ENCODE measurements at regions of chr1 and their contacts with region 1.

Region 1: GRCh38 chr1:44807262-44808062 is at the start of gene DYNLT4:
- DNase-seq: peak; percentile 86 to 99 (median 90)
- ATAC-seq: peak; percentile 84
- H3K4me3 ChIP-seq: peak within 1 kb of the TSS; percentile 30; the same call in 1 of the 2 replicates
- H3K27ac ChIP-seq: peak within 1 kb of the TSS; percentile 100
- H3K4me1 ChIP-seq: peaks cover 59 to 72% of the 10 kb centered on the region in 2 experiments
- H3K27me3 ChIP-seq: no peaks in the 10 kb centered on the region
- CTCF ChIP-seq: peak in 1 of 3 experiments; percentile 0; a peak in 1 of 6 replicates
- EP300 ChIP-seq: peak; percentile 71; the same call in 1 of the 2 replicates
- POLR2A ChIP-seq: peak; percentile 88
- RAD21 ChIP-seq: peak; percentile 9 to 20; a peak in 3 of 4 replicates
- polyA plus RNA-seq, gene DYNLT4: not detected

Region 2: GRCh38 chr1:44780583-44781121 is 26.8 kb before region 1 on chr1:
- CTCF ChIA-PET with region 1: no interaction called
- POLR2A ChIA-PET with region 1: interaction called, 30 read pairs
- in situ Hi-C with region 1: no loop called
- intact Hi-C with region 1: no loop called
- DNase-seq: peak in 1 of 4 experiments; percentile 51
- ATAC-seq: peak; percentile 42
- H3K4me3 ChIP-seq: no peak overlapping the region
- H3K27ac ChIP-seq: peak overlapping the region; percentile 11; the same call in 1 of the 3 replicates
- H3K4me1 ChIP-seq: peaks cover 13 to 20% of the 10 kb centered on the region in 2 experiments
- H3K27me3 ChIP-seq: no peaks in the 10 kb centered on the region
- CTCF ChIP-seq: peak in 2 of 3 experiments; percentile 12 to 15; a peak in 1 of 6 replicates
- EP300 ChIP-seq: no peak
- POLR2A ChIP-seq: no peak; the same call in none of the 2 replicates
- RAD21 ChIP-seq: no peak

Region 3: DNA sequence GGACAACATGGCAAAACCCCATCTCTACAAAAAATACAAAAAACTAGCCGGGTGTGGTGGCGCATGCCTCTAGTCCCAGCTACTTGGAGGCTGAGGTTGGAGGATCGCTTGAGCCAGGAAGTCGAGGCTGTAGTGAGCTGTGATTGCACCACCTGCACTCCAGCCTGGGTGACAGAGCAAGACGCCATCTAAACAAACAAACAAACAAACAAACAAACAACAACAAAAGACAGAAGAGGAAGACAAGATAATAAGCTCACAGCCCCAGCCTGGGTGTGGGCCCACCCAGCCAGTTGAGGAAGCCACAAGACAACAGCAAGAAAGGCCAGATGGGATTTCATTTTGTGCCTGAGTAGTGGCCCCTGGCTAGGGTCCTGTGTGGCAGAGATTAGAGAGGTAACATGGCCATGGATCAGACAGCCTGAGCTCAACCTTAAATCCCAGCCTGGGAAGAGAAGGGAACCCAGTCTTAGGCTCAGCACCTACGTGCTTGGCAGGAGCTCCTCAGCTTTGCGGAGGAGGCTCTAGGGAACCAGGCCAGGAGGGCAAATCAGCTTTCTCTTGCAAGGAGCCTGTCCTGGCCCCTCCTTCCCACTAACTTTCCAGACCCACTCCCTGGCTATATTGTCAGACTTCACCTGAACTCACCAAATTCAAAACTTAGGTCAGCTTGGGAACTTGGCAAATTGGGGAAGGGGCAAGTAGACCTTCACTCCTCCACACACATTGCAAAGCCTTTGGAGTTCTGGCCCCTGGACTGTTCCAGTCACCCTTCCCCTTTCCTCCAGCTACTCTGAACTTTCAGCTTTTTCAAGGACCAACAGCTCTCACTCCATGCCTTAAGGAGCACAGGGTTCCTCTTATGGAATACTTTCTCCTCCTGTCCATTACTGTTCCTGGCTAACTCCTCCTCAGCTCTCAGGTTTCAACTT is 14.4 kb before region 1 on chr1:
- CTCF ChIA-PET with region 1: no interaction called
- POLR2A ChIA-PET with region 1: interaction called, 10 read pairs
- in situ Hi-C with region 1: no loop called
- intact Hi-C with region 1: no loop called
- DNase-seq: no peak
- ATAC-seq: no peak
- H3K4me3 ChIP-seq: no peak overlapping the region
- H3K27ac ChIP-seq: no peak overlapping the region
- H3K4me1 ChIP-seq: peaks cover 16 to 20% of the 10 kb centered on the region in 2 experiments; a peak in 4 of 5 replicates
- H3K27me3 ChIP-seq: no peaks in the 10 kb centered on the region
- CTCF ChIP-seq: no peak
- EP300 ChIP-seq: no peak
- POLR2A ChIP-seq: no peak
- RAD21 ChIP-seq: no peak

Region 4: DNA sequence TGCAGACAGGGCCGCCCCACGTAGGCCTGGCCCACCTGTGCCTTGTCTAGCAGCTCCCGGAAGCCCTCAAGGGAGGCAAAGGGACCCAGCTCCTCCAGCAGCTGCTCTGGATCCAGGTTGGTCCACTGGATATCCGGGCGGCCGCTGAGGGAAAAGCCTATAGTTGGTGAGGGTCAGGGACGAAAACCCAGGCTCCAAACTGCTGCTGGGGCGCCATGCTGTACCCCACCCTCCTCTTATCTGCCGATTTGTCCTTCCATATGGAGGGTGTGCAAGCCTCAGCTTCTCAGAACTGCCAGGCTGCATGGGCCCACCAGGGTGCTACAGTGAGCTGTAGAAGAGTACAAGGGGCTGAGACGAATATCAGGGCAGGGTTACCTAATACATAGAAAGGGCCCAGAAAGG is 23.4 kb after region 1 on chr1:
- CTCF ChIA-PET with region 1: no interaction called
- POLR2A ChIA-PET with region 1: interaction called, 16 read pairs
- in situ Hi-C with region 1: no loop called
- intact Hi-C with region 1: no loop called
- DNase-seq: peak; percentile 73 to 82 (median 78)
- ATAC-seq: peak; percentile 74
- H3K4me3 ChIP-seq: no peak overlapping the region
- H3K27ac ChIP-seq: peak overlapping the region; percentile 46
- H3K4me1 ChIP-seq: peaks cover 51 to 75% of the 10 kb centered on the region in 2 experiments
- H3K27me3 ChIP-seq: no peaks in the 10 kb centered on the region
- CTCF ChIP-seq: peak; percentile 47 to 58 (median 54)
- EP300 ChIP-seq: no peak
- POLR2A ChIP-seq: no peak
- RAD21 ChIP-seq: peak in 1 of 2 experiments; percentile 33; a peak in 2 of 4 replicates

Measured in K562 (cell line).